ENCODE measurements at regions of chr2 and their contacts with region 1.

Region 1: GRCh38 chr2:216666461-216667233 is 28.7 kb downstream of the IGFBP5 start:
- DNase-seq: peak; percentile 62
- H3K4me3 Mint-ChIP-seq: no peak overlapping the region
- H3K27ac Mint-ChIP-seq: no peak overlapping the region
- H3K4me1 Mint-ChIP-seq: no peaks in the 10 kb centered on the region
- H3K27me3 Mint-ChIP-seq: peaks cover 2% of the 10 kb centered on the region

Region 2: DNA sequence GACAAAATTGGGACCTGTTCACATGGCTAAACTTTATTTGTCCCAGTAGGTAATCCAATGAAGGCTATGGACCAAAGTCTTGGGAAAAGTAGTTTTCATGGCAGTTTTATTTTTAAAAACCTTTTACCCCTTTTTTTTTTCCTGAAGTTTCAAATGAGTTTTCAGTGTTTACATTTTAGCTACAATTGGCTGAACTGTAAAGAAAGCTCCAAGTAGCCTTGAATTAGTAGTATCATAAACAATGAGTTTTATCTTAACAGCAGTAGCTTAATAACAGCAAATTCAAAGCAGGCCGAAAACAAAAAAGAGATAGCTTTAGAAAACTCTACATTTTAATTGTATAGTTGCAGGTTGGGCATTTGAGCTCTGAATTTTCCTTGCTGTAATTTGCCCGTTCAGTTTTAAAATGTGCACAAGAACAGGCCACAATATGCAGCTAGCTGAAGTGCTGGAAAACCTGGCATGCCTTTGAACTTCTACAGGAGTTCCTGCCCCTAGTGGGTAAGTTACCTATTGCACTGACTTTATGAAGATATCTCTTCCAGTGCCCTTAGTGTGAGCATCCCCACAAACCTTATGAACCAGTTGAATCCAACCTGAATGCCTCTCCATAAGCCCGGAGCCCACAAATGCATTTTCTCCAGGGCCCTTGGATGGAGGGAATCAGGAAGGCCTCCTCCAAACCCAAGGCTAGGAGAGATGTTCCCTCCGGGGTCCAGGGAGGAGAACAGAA is 450.8 kb before region 1 on chr2:
- intact Hi-C with region 1: loop called (anchors 5 kb)
- DNase-seq: no peak
- H3K4me3 Mint-ChIP-seq: no peak overlapping the region
- H3K27ac Mint-ChIP-seq: peak overlapping the region; percentile 52
- H3K4me1 Mint-ChIP-seq: peaks cover 53% of the 10 kb centered on the region
- H3K27me3 Mint-ChIP-seq: no peaks in the 10 kb centered on the region

Region 3: DNA sequence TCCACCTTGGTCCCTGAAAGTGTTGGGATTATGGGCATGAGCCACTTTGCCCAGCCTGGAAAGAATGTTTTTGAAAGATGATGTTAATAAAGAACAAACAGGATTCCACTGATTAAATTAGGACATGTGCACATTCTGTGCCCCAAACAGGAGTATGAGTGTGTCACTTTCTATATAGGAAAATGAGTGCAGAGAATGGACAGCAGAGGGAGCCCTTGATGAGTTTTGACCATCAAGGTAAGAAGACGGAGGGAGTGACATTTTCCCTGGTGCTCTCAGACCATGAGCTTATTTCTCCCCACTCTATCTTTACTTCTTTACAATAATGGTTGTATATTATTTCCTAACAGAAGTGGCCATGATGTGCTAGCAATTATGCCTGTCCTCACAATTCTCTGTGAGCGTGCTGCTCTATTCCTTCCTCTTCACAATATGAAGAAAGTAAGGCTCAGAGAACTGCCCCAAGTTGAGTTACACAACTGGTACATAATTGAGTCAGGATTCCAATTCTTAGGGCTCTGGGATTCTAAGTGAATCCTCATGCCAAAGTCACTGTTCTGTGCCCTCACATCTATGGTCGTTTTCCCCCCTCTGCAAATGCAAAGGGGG is 147.4 kb before region 1 on chr2:
- intact Hi-C with region 1: loop called (anchors 1 kb)
- DNase-seq: peak; percentile 39
- H3K4me3 Mint-ChIP-seq: no peak overlapping the region
- H3K27ac Mint-ChIP-seq: no peak overlapping the region
- H3K4me1 Mint-ChIP-seq: no peaks in the 10 kb centered on the region
- H3K27me3 Mint-ChIP-seq: no peaks in the 10 kb centered on the region

Region 4: GRCh38 chr2:216956820-216957493 is 290.3 kb after region 1 on chr2:
- intact Hi-C with region 1: no loop called
- DNase-seq: no peak
- H3K4me3 Mint-ChIP-seq: no peak overlapping the region
- H3K27ac Mint-ChIP-seq: no peak overlapping the region
- H3K4me1 Mint-ChIP-seq: no peaks in the 10 kb centered on the region
- H3K27me3 Mint-ChIP-seq: peaks cover 3% of the 10 kb centered on the region

Region 5: GRCh38 chr2:216967889-216968288 is 301.2 kb after region 1 on chr2:
- intact Hi-C with region 1: no loop called
- DNase-seq: no peak
- H3K4me3 Mint-ChIP-seq: no peak overlapping the region
- H3K27ac Mint-ChIP-seq: no peak overlapping the region
- H3K4me1 Mint-ChIP-seq: no peaks in the 10 kb centered on the region
- H3K27me3 Mint-ChIP-seq: peaks cover 2% of the 10 kb centered on the region

Measured in activated T-helper 1 cell treated with anti-CD3 and anti-CD28 coated beads, Interleukin-12 subunit alpha, Interleukin-12 subunit beta, Interleukin-2, Interleukin-4 antibody, amounts not matched to agents 30 ng/mL and 10 ng/mL and 1 ng/mL, durations not matched to agents 14 hours and 24 hours and 36 hours (primary cell).